ENCODE measurements at regions of chr17 and their contacts with region 1.

Region 1: DNA sequence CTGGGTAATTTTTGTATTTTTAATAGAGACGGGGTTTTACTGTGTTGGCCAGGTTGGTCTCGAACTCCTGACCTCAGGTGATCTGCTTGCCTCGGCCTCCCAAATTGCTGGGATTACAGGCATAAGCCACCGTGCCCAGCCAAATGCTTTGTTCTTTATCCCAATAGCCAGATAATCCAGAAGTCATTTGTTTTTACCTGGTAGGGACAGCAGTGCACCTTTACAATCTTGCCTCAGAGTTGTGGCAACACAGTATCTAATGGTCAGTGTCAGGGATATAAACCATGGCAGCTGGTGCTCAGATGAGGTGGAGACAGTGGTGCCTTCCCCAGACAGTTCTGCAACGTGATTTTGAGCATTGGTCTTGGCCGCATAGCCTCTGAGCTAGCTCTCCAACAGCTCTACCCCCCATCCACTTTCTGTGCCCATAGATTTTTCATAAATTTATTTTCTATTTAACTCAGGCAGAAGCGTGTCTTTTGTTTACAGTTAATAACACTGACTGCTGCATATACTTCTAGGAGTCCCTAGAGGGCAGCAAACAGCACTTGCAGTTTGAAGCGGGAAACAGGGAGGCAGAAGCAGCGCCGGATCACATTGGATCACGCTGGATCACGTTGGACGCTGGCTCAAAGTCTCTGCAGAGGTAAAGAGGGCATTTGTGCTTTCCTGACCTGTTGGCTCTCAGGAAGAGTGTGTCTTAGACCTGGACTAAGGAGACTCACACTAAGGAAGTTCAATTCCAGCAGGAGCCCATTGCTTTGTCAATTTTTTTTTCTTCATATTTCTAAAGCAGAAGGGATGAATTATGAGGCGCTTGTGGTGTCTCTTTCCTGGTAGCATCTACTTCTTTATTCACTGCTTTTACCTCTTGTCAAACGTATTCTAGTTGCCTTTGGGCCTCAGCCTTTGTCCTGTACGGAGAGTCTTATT is 5.1 kb upstream of the GGT6 start:
- DNase-seq: peak; percentile 77
- ATAC-seq: peak; percentile 64
- H3K4me3 Mint-ChIP-seq: no peak overlapping the region
- H3K27ac Mint-ChIP-seq: no peak overlapping the region
- H3K4me1 Mint-ChIP-seq: peaks cover 34% of the 10 kb centered on the region
- H3K27me3 Mint-ChIP-seq: no peaks in the 10 kb centered on the region
- CTCF ChIP-seq: peak; percentile 79

Region 2: DNA sequence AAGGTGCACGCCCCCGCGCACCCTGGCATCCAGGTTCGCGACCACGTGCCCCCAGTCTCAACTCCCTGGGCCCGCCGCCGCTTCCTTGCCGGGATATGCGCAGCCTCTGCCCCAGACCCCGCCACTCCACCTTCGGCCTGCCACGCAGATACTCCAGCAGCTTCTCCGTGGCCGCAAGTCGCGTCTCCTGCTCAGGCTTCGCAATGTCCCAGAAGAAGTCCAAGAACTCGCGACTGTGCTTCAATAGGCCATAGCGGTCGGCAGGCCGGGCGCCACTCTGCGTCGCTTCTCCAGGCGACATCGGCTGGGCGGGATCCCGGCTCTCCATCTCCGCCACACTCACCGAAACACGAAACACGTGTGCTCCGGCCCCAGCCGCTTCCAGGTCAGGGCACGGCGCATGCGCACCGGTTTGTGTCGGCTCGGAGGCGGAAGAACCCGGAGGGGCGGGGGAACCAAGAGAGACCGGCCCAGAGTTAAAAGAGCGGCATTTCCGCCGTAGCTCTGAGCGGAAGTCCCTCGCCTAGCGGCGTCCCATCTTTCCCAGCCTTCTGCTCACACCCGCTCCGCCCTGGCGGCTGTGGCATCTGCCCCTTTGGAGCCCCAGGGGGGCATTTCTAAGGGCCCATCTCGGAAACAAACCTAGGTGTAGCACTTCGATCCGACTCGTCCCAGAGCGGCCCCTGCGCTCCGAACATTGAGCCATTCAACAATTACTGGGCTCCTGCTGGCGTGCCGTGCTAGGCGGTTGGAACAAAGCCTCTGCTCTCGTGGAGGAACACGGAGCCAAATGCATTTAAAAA is 10.3 kb before region 1 on chr17 and contains the start of gene MYBBP1A:
- CTCF ChIA-PET with region 1: interaction called, 51 read pairs
- POLR2A ChIA-PET with region 1: interaction called, 7 read pairs
- intact Hi-C with region 1: no loop called
- DNase-seq: peak; percentile 98
- ATAC-seq: peak; percentile 95
- H3K4me3 Mint-ChIP-seq: peak within 1 kb of the TSS; percentile 97
- H3K27ac Mint-ChIP-seq: peak within 1 kb of the TSS; percentile 95
- H3K4me1 Mint-ChIP-seq: peaks cover 22% of the 10 kb centered on the region
- H3K27me3 Mint-ChIP-seq: no peaks in the 10 kb centered on the region
- CTCF ChIP-seq: no peak
- total RNA-seq, gene MYBBP1A: 104 to 107 TPM

Region 3: DNA sequence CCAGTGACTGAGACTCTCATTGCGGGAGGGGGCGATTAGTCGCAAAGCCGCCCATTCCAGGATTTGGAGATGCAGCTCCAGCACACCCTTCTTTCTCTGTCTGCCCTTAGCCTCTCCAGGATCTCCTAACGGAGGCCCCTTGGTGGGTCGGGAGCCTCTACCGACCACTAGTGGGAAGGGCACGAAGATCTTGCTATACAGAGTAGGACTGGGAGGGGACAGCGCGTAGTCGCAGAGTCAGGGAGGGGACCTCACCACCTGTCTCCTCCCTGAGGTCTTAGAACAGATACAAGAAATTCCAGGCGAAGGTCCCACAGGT is 18.3 kb after region 1 on chr17:
- CTCF ChIA-PET with region 1: interaction called, 13 read pairs
- POLR2A ChIA-PET with region 1: interaction called, 3 read pairs
- intact Hi-C with region 1: no loop called
- DNase-seq: peak; percentile 27
- ATAC-seq: peak; percentile 66
- H3K4me3 Mint-ChIP-seq: peak overlapping the region; percentile 56
- H3K27ac Mint-ChIP-seq: no peak overlapping the region
- H3K4me1 Mint-ChIP-seq: peaks cover 6% of the 10 kb centered on the region
- H3K27me3 Mint-ChIP-seq: peaks cover 36% of the 10 kb centered on the region
- CTCF ChIP-seq: peak; percentile 12

Region 4: GRCh38 chr17:4631836-4632580 is 66.5 kb after region 1 on chr17:
- CTCF ChIA-PET with region 1: interaction called, 101 read pairs
- POLR2A ChIA-PET with region 1: no interaction called
- intact Hi-C with region 1: no loop called
- DNase-seq: no peak
- ATAC-seq: no peak
- H3K4me3 Mint-ChIP-seq: no peak overlapping the region
- H3K27ac Mint-ChIP-seq: no peak overlapping the region
- H3K4me1 Mint-ChIP-seq: peaks cover 10% of the 10 kb centered on the region
- H3K27me3 Mint-ChIP-seq: peaks cover 33% of the 10 kb centered on the region
- CTCF ChIP-seq: no peak

Region 5: DNA sequence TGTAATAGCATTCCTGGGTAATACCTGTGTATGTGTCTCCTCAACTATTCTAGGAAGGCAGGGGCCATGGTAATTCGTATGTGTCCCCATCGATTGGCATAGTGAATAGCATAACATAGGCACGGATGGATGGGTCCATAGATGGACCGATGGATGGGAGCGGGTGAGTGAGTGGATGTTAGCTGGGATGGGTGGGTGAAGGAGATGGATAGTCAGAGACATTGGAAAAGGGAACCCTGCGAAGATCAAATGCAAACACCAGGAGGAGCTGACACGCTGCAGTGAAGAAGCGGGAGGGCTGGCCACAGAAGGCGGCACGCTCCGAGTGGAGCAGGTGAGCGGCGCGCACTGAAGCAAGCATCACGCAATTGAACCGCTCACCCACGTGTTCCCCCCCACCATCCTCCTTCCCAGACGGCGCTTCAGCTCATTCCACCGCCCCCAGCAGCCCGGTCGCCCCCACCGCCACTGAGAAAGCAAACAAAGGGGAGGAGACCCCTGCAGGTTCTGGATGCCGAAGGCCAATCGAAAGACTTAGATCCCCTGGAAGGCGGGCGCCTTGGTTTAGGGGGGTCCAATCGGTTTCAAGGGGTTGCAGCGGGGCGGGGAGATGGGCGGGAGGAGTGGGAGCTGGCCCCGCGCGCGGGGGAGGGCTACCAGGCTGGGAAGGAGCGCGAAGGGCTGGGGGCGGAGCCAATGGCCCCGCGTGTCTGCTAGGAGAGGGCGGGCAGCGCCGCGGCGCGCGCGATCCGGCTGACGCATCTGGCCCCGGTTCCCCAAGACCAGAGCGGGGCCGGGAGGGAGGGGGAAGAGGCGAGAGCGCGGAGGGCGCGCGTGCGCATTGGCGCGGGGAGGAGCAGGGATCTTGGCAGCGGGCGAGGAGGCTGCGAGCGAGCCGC is 144.6 kb after region 1 on chr17 and contains the start of gene ARRB2:
- CTCF ChIA-PET with region 1: interaction called, 4 read pairs
- POLR2A ChIA-PET with region 1: interaction called, 3 read pairs
- intact Hi-C with region 1: loop called (anchors 10 kb)
- DNase-seq: peak; percentile 99
- ATAC-seq: peak; percentile 84
- H3K4me3 Mint-ChIP-seq: peak within 1 kb of the TSS; percentile 98
- H3K27ac Mint-ChIP-seq: peak within 1 kb of the TSS; percentile 94
- H3K4me1 Mint-ChIP-seq: peaks cover 46% of the 10 kb centered on the region
- H3K27me3 Mint-ChIP-seq: no peaks in the 10 kb centered on the region
- CTCF ChIP-seq: peak; percentile 58
- total RNA-seq, gene ARRB2: 163 to 176 TPM

Measured in activated CD8-positive, alpha-beta T cell treated with anti-CD3 and anti-CD28 coated beads for 36 hours (primary cell).